GM18951 (cell line): ENCODE measurements at regions of chr14 and their contacts with region 1.

Region 1: GRCh38 chr14:100108042-100108825 is 43.0 kb downstream of the EVL start:
- POLR2A ChIP-seq: no peak

Region 2: DNA sequence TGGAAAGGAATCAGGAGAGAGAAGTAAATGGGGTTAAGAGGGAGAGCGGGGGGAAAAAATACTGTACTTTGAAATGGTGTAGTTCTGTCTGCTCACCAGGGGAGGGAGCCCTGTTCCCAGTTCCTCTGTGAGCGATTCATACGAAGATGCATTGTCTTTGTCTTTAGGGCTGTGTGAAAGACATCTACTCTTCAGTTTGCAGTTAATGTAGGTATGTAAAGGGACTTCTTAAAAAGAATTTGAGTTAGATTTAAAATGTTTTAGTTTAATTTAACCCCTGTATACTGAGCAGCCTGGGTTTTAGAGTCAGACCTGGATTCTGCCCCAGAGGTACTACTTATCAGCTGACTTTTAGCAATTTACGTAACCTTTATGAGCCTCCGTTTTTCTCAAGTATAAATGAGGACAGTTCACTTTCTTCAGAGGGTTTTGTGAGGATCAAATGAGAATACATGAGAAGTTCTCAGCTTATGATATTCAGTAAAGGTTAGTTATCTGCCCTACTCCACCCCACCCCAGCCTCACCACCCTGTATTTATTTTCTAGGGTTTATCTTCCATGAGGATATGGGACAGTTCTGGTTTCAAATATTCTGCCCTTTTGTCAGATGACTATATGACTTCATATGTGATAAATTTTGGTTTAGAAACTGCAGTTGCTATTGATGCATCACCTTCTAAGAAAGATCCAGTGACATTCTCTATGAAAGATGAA is 125.5 kb before region 1 on chr14:
- in situ Hi-C with region 1: loop called (anchors 25 kb)
- POLR2A ChIP-seq: no peak

Region 3: GRCh38 chr14:100147181-100147631 is 39.0 kb after region 1 on chr14:
- in situ Hi-C with region 1: no loop called
- POLR2A ChIP-seq: no peak

Region 4: DNA sequence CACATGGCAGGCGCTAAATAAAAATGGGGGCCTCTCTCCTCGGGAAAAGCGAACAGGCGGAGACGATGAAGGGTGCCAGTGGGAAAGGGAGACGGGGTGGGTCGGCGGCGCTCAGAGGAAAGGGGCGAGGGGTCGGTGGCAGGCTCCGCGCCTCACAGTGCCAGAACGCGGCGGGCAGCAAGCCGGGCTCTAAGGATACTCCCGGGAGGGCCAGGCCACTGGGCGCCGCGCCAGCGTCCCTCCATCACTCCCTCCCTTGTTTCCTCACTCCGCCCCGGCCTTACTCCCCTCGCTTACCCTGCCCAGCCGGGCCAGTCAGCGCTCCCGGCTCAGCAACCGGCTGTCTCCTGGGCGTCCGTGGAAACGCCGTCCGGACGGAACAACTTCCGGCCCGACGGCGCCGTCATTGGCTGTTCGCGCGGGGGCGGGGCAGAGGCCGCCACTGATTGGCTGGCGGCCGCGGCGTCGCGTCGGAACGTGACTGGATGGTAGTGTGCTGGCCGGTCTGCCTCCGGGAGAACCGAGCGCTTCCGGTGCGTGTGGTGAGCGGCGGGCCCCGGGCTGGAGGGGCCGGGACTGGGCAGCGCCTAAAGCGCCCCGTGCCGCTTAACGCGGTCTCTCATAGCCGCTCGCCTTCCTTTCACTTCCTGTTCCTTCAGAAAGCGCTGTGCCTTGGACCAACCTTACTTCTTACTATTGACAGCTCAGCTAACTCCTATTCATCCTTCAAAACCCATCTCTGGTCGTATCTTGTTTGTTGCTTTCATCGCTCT is 267.9 kb after region 1 on chr14:
- in situ Hi-C with region 1: no loop called
- POLR2A ChIP-seq: peak; percentile 78